Mammary epithelial cell (primary cell): ENCODE measurements at regions of chr19 and their contacts with region 1.

Region 1: GRCh38 chr19:48872182-48872883 is at the start of gene PPP1R15A:
- DNase-seq: peak; percentile 98
- H3K4me3 ChIP-seq: peak within 1 kb of the TSS; percentile 67 to 93 (median 89)
- H3K27ac ChIP-seq: peak within 1 kb of the TSS; percentile 99
- H3K4me1 ChIP-seq: peaks cover 33% of the 10 kb centered on the region
- H3K27me3 ChIP-seq: no peaks in the 10 kb centered on the region
- CTCF ChIP-seq: no peak
- total RNA-seq, gene PPP1R15A: 28.8 to 200 TPM

Region 2: DNA sequence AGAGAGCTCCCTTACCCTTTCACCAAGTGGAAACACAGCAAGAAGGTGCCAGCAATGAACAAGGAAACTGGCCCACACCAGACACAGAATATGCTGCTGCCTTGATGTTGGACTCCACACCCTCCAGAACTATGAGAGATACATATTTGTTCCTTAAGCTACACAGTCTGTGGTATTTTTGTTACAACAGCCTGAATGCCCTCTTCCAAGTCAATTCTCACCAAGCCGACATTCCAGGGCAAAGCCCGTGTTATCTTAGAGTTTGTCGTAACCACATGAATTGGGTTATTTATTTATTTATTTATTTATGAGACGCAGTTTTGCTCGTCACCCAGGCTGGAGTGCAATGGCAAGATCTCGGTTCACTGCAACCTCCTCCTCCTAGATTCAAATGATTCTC is 102.1 kb before region 1 on chr19:
- CTCF ChIA-PET with region 1: no interaction called
- dilution Hi-C with region 1: no loop called
- in situ Hi-C with region 1: no loop called
- intact Hi-C with region 1: no loop called
- DNase-seq: peak; percentile 66
- H3K4me3 ChIP-seq: no peak overlapping the region
- H3K27ac ChIP-seq: no peak overlapping the region
- H3K4me1 ChIP-seq: peaks cover 6% of the 10 kb centered on the region
- H3K27me3 ChIP-seq: no peaks in the 10 kb centered on the region
- CTCF ChIP-seq: no peak

Region 3: GRCh38 chr19:48926909-48927308 is 54.6 kb after region 1 on chr19:
- CTCF ChIA-PET with region 1: no interaction called
- dilution Hi-C with region 1: no loop called
- in situ Hi-C with region 1: no loop called
- intact Hi-C with region 1: loop called (anchors 1 kb)
- DNase-seq: peak; percentile 99
- H3K4me3 ChIP-seq: no peak overlapping the region
- H3K27ac ChIP-seq: peak overlapping the region; percentile 92
- H3K4me1 ChIP-seq: peaks cover 23% of the 10 kb centered on the region
- H3K27me3 ChIP-seq: no peaks in the 10 kb centered on the region
- CTCF ChIP-seq: no peak